Dendritic cell treated with granulocyte-macrophage colony-stimulating factor and Interleukin-4, amounts not matched to agents 40 ng/mL and 50 ng/mL, for 4 days (primary cell): ENCODE measurements at regions of chr7 and their contacts with region 1.

Region 1: GRCh38 chr7:88312061-88312663 is 5.5 kb upstream of the STEAP4 start:
- H3K4me3 Mint-ChIP-seq: no peak overlapping the region
- H3K27ac Mint-ChIP-seq: peak overlapping the region; percentile 46
- H3K4me1 Mint-ChIP-seq: peaks cover 64% of the 10 kb centered on the region
- H3K27me3 Mint-ChIP-seq: no peaks in the 10 kb centered on the region

Region 2: GRCh38 chr7:88268863-88269262 is 43.3 kb before region 1 on chr7:
- intact Hi-C with region 1: loop called (anchors 5 kb)
- H3K4me3 Mint-ChIP-seq: no peak overlapping the region
- H3K27ac Mint-ChIP-seq: no peak overlapping the region
- H3K4me1 Mint-ChIP-seq: peaks cover 11% of the 10 kb centered on the region
- H3K27me3 Mint-ChIP-seq: no peaks in the 10 kb centered on the region